CD8-positive, alpha-beta T cell (primary cell): ENCODE measurements at regions of chr11 and their contacts with region 1.

Region 1: GRCh38 chr11:12052676-12053605 is 44.5 kb upstream of the DKK3 start:
- DNase-seq: peak in 4 of 9 experiments; percentile 28 to 48 (median 38)
- ATAC-seq: no peak
- H3K4me3 ChIP-seq: no peak overlapping the region
- H3K4me3 Mint-ChIP-seq: no peak overlapping the region
- H3K27ac ChIP-seq: no peak overlapping the region
- H3K27ac Mint-ChIP-seq: no peak overlapping the region
- H3K4me1 ChIP-seq: no peaks in the 10 kb centered on the region
- H3K4me1 Mint-ChIP-seq: no peaks in the 10 kb centered on the region
- H3K27me3 ChIP-seq: no peaks in the 10 kb centered on the region
- H3K27me3 Mint-ChIP-seq: no peaks in the 10 kb centered on the region
- CTCF ChIP-seq: no peak

Region 2: DNA sequence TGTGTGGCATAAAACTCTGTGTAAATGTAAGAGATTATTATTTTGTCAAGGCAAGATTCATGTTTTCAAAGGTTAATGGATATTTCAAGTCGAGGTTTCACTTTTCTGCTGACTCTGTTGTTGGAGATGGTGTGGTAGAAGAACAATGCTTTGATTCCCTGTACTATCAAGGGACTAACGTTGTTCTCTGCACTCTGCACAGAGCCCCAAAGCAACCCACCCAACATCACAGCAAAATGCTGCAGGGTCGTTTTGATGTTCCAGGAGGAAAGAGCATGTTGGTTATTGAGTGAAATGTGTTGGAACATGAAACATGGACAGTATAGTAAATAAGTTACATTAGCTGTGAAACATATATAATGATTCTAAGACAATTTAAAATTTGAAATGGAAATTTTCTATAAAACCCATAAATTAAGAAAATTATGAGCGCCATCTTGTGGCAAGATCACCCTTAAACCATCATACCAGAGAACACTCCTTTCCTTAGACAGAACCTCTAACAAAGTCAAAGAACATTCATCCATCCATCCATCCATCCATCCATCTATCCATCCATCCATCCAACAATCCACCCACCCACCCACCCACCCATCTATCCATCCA is 1030.7 kb before region 1 on chr11:
- CTCF ChIA-PET with region 1: no interaction called
- POLR2A ChIA-PET with region 1: no interaction called
- intact Hi-C with region 1: loop called in 1 of 2 experiments (anchors 5 kb)
- DNase-seq: peak in 3 of 9 experiments; percentile 27 to 54 (median 48)
- ATAC-seq: no peak
- H3K4me3 ChIP-seq: no peak overlapping the region
- H3K4me3 Mint-ChIP-seq: no peak overlapping the region
- H3K27ac ChIP-seq: no peak overlapping the region
- H3K27ac Mint-ChIP-seq: no peak overlapping the region
- H3K4me1 ChIP-seq: no peaks in the 10 kb centered on the region
- H3K4me1 Mint-ChIP-seq: no peaks in the 10 kb centered on the region
- H3K27me3 ChIP-seq: no peaks in the 10 kb centered on the region
- H3K27me3 Mint-ChIP-seq: peaks cover 4% of the 10 kb centered on the region
- CTCF ChIP-seq: peak; percentile 63

Region 3: GRCh38 chr11:11621573-11622319 is 431.2 kb before region 1 on chr11 and contains the start of gene GALNT18:
- CTCF ChIA-PET with region 1: no interaction called
- POLR2A ChIA-PET with region 1: no interaction called
- intact Hi-C with region 1: no loop called
- DNase-seq: peak; percentile 6 to 74 (median 35)
- ATAC-seq: peak; percentile 93
- H3K4me3 ChIP-seq: peak within 1 kb of the TSS; percentile 26 to 36
- H3K4me3 Mint-ChIP-seq: peak within 1 kb of the TSS; percentile 45
- H3K27ac ChIP-seq: no peak within 1 kb of the TSS
- H3K27ac Mint-ChIP-seq: no peak within 1 kb of the TSS
- H3K4me1 ChIP-seq: no peaks in the 10 kb centered on the region
- H3K4me1 Mint-ChIP-seq: peaks cover 7% of the 10 kb centered on the region
- H3K27me3 ChIP-seq: peaks cover 0 to 9% of the 10 kb centered on the region in 2 experiments
- H3K27me3 Mint-ChIP-seq: peaks cover 42% of the 10 kb centered on the region
- CTCF ChIP-seq: no peak
- total RNA-seq, gene GALNT18: not detected

Region 4: DNA sequence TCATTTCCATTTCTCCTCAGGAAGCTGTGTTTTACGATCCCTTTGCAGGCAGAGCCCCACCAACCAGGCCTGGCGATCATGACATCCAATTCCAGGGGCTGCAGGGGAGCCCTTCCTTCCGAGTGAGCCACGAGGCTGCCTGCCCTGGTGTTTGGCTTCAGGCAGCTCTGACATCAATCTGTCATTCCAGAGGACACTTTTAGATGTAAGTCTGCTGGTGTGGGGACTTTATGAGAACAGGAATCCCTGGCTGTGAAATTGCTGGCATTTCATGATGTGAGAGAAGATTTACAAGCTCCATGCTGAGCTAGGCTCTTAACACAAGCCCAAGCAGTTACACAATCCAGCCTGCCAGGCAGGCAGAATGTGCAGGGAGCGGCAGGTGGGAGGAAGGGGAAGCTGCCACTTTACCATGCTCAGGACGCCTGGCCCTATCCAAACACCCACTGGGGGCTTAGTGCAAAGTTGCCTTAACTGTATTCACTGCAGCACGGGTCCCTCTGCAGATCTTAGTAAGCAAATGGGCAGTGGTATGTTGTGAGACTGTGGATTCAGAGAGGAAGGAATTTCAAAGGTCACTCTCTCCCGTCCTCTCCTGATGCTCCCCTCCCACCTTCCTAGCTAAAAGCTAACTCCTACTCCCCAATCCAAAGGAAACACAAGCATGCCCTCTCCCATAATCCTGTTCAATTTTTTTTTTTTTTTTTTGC is 14.0 kb after region 1 on chr11:
- CTCF ChIA-PET with region 1: interaction called, 34 read pairs
- POLR2A ChIA-PET with region 1: no interaction called
- intact Hi-C with region 1: no loop called
- DNase-seq: no peak
- ATAC-seq: no peak
- H3K4me3 ChIP-seq: no peak overlapping the region
- H3K4me3 Mint-ChIP-seq: no peak overlapping the region
- H3K27ac ChIP-seq: no peak overlapping the region
- H3K27ac Mint-ChIP-seq: no peak overlapping the region
- H3K4me1 ChIP-seq: no peaks in the 10 kb centered on the region
- H3K4me1 Mint-ChIP-seq: peaks cover 2% of the 10 kb centered on the region
- H3K27me3 ChIP-seq: no peaks in the 10 kb centered on the region
- H3K27me3 Mint-ChIP-seq: no peaks in the 10 kb centered on the region
- CTCF ChIP-seq: no peak